ENCODE measurements at regions of chr6 and their contacts with region 1.

Region 1: GRCh38 chr6:4055420-4056041 is 23.4 kb downstream of the FAM217A start:
- DNase-seq: peak in 2 of 6 donors; percentile 19 to 52
- ATAC-seq: peak; percentile 81 to 96 (median 90)
- H3K4me3 ChIP-seq: no peak overlapping the region
- H3K27ac ChIP-seq: no peak overlapping the region
- H3K4me1 ChIP-seq: peaks cover 0 to 7% (median 0%) of the 10 kb centered on the region in 3 donors
- H3K27me3 ChIP-seq: no peaks in the 10 kb centered on the region
- CTCF ChIP-seq: peak in 1 of 4 donors; percentile 36

Region 2: DNA sequence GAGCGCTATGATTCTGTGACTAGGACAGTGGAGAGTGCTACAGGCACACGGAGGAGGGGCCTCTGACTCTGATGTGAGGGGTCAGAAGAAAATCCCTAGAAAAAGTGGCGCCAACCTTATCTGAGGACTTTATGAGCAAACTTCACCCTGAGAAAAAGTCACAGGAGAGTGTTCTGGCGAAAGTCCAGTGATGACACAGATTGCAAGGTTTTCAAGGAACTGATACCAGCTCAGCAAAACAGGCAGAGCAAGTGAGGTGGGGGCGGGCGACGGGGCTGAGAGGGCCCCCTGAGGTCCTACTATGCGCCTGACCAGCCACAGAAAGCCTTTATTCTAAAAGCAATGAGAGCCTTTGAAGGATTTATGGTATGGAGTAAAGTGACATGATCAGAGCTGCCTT is 672.0 kb before region 1 on chr6:
- intact Hi-C with region 1: no loop called
- DNase-seq: peak in 2 of 6 donors; percentile 39 to 60
- ATAC-seq: peak; percentile 41 to 58 (median 44)
- H3K4me3 ChIP-seq: no peak overlapping the region
- H3K27ac ChIP-seq: no peak overlapping the region
- H3K4me1 ChIP-seq: peaks cover 11 to 36% (median 26%) of the 10 kb centered on the region in 3 donors
- H3K27me3 ChIP-seq: no peaks in the 10 kb centered on the region
- CTCF ChIP-seq: no peak

Region 3: GRCh38 chr6:3977875-3978711 is 77.4 kb before region 1 on chr6:
- intact Hi-C with region 1: no loop called
- DNase-seq: peak in 1 of 6 donors; percentile 16
- ATAC-seq: peak in 3 of 4 donors; percentile 69 to 83 (median 72)
- H3K4me3 ChIP-seq: no peak overlapping the region
- H3K27ac ChIP-seq: no peak overlapping the region
- H3K4me1 ChIP-seq: no peaks in the 10 kb centered on the region
- H3K27me3 ChIP-seq: no peaks in the 10 kb centered on the region
- CTCF ChIP-seq: peak in 3 of 4 donors; percentile 9 to 22 (median 17)

Region 4: GRCh38 chr6:3990692-3991501 is 64.6 kb before region 1 on chr6:
- intact Hi-C with region 1: no loop called
- DNase-seq: peak; percentile 78 to 89 (median 88)
- ATAC-seq: peak; percentile 92 to 99 (median 98)
- H3K4me3 ChIP-seq: peak overlapping the region in 2 of 4 donors; percentile 29 to 37
- H3K27ac ChIP-seq: peak overlapping the region in 2 of 4 donors; percentile 34 to 41
- H3K4me1 ChIP-seq: peaks cover 0 to 5% (median 4%) of the 10 kb centered on the region in 3 donors
- H3K27me3 ChIP-seq: no peaks in the 10 kb centered on the region
- CTCF ChIP-seq: peak; percentile 65 to 79 (median 70)

Region 5: DNA sequence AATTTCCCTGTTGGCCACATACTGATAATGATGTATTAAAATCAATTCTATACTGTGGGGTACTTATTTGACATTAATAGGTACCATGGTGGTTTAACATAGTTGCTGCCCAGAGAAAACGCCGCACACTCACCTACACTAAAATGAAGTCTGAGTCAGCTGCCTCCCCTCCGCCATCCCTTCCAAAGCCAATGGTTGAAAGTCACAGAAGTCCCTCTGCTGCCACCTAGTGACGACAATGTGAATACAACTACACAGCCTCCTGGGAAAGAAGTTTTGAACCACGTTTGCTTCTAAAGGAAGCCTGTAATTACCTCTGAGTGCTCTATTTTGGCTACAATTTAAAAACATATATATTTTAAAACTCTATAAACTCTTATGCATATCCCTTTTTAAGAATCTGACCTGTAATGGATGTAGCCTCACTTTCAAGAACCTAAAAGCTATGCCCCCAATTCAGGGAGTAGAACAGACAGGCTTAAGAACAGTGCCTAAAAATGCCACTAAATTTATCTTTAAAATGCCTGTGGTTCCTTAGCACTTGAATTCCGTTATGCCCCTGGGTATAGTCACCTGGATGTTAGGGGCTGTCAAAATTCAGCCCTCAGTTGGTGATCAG is 100.4 kb after region 1 on chr6:
- intact Hi-C with region 1: loop called in 2 of 3 experiments (anchors 5 to 10 kb)
- DNase-seq: peak in 5 of 6 donors; percentile 53 to 85 (median 68)
- ATAC-seq: peak; percentile 94 to 100 (median 98)
- H3K4me3 ChIP-seq: no peak overlapping the region
- H3K27ac ChIP-seq: no peak overlapping the region
- H3K4me1 ChIP-seq: no peaks in the 10 kb centered on the region
- H3K27me3 ChIP-seq: no peaks in the 10 kb centered on the region
- CTCF ChIP-seq: peak; percentile 68 to 85 (median 78)

Measured in pancreas (tissue), 10 donors.